ENCODE measurements at regions of chr5 and their contacts with region 1.

Region 1: DNA sequence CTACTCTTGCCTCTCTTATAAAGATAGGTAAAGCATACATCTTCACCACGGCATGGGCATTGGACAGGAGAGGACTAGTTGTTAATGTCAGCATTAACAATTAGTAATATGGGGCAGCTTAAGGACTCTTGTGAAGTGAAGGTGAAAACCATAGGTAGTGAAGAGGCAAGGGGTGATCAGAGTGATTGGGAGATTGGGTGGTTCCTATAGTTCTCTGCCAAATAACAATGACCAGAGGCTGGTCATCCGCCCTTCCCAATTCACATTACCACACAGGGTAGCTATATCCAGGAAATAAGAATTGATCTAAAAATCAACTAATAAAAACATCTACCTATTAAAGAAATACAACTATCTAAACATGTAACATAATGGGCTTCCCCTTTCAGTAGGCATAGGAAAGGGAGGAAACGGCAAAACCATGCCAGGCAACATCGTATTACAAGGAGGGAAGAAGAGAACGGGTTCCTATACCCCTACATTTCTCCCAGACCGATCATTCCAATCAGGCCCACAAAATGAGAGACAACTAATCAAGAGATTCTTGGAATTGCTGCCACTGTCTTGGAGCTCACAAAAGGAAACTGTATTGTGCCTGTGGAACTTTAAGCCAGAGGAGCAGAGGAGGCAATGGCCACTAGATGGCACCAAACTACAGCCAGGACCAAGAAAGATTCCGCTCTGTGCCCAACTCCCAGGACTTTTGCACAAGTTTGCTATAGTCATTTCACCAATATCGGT is 121.6 kb downstream of the FBXL17 start:
- DNase-seq: peak; percentile 83
- H3K4me3 Mint-ChIP-seq: no peak overlapping the region
- H3K27ac Mint-ChIP-seq: no peak overlapping the region
- H3K4me1 Mint-ChIP-seq: no peaks in the 10 kb centered on the region
- H3K27me3 Mint-ChIP-seq: no peaks in the 10 kb centered on the region
- CTCF ChIP-seq: peak; percentile 86

Region 2: DNA sequence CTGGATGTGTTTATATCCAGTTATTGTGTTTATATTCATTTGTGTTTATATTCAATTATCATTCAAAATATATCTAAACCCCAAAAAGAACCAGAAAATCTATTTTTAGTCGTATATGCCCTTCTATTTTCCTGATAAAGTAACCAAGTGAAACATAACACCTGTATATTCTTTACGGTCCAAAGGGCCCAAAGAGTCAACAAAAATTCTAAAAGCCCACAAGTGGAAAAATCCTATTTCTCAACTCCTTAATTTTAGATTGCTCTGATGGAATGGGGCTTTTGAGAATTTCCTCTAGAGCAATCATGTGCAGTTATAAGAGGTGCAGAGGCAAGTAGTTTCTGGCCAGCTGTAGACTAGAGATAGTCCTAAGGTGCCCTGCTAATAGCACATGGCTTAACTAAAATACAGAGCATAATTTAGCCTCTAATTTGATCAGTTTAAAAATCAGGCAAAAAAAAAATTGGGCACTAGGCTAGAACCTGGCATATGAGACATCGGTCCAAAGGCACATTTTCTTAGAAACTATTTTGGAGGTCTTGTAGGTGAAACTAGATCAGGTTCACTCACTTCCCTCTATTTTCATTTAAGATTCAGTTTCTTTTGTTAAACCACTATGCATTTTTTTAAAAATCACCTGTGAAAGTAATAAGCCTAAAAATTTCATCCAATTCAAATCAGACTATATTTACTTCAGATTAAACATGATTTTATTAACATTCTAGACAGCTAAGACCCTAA is 134.3 kb before region 1 on chr5:
- CTCF ChIA-PET with region 1: no interaction called
- POLR2A ChIA-PET with region 1: no interaction called
- intact Hi-C with region 1: no loop called
- DNase-seq: no peak
- H3K4me3 Mint-ChIP-seq: no peak overlapping the region
- H3K27ac Mint-ChIP-seq: no peak overlapping the region
- H3K4me1 Mint-ChIP-seq: no peaks in the 10 kb centered on the region
- H3K27me3 Mint-ChIP-seq: no peaks in the 10 kb centered on the region
- CTCF ChIP-seq: no peak

Region 3: GRCh38 chr5:108174286-108174685 is 86.0 kb before region 1 on chr5:
- CTCF ChIA-PET with region 1: no interaction called
- POLR2A ChIA-PET with region 1: no interaction called
- intact Hi-C with region 1: no loop called
- DNase-seq: no peak
- H3K4me3 Mint-ChIP-seq: no peak overlapping the region
- H3K27ac Mint-ChIP-seq: no peak overlapping the region
- H3K4me1 Mint-ChIP-seq: no peaks in the 10 kb centered on the region
- H3K27me3 Mint-ChIP-seq: no peaks in the 10 kb centered on the region
- CTCF ChIP-seq: no peak

Region 4: GRCh38 chr5:108238936-108239887 is 21.1 kb before region 1 on chr5:
- CTCF ChIA-PET with region 1: interaction called, 23 read pairs
- POLR2A ChIA-PET with region 1: interaction called, 3 read pairs
- intact Hi-C with region 1: no loop called
- DNase-seq: peak; percentile 93
- H3K4me3 Mint-ChIP-seq: no peak overlapping the region
- H3K27ac Mint-ChIP-seq: peak overlapping the region; percentile 35
- H3K4me1 Mint-ChIP-seq: peaks cover 4% of the 10 kb centered on the region
- H3K27me3 Mint-ChIP-seq: no peaks in the 10 kb centered on the region
- CTCF ChIP-seq: no peak

Region 5: GRCh38 chr5:108311682-108312081 is 51.4 kb after region 1 on chr5:
- CTCF ChIA-PET with region 1: interaction called, 22 read pairs
- POLR2A ChIA-PET with region 1: no interaction called
- intact Hi-C with region 1: no loop called
- DNase-seq: peak; percentile 23
- H3K4me3 Mint-ChIP-seq: no peak overlapping the region
- H3K27ac Mint-ChIP-seq: no peak overlapping the region
- H3K4me1 Mint-ChIP-seq: no peaks in the 10 kb centered on the region
- H3K27me3 Mint-ChIP-seq: no peaks in the 10 kb centered on the region
- CTCF ChIP-seq: no peak

Region 6: GRCh38 chr5:108334225-108334624 is 73.9 kb after region 1 on chr5:
- CTCF ChIA-PET with region 1: interaction called, 15 read pairs
- POLR2A ChIA-PET with region 1: no interaction called
- intact Hi-C with region 1: no loop called
- DNase-seq: no peak
- H3K4me3 Mint-ChIP-seq: no peak overlapping the region
- H3K27ac Mint-ChIP-seq: no peak overlapping the region
- H3K4me1 Mint-ChIP-seq: no peaks in the 10 kb centered on the region
- H3K27me3 Mint-ChIP-seq: no peaks in the 10 kb centered on the region
- CTCF ChIP-seq: no peak

Region 7: GRCh38 chr5:108353087-108353486 is 92.8 kb after region 1 on chr5:
- CTCF ChIA-PET with region 1: interaction called, 27 read pairs
- POLR2A ChIA-PET with region 1: no interaction called
- intact Hi-C with region 1: no loop called
- DNase-seq: no peak
- H3K4me3 Mint-ChIP-seq: no peak overlapping the region
- H3K27ac Mint-ChIP-seq: no peak overlapping the region
- H3K4me1 Mint-ChIP-seq: no peaks in the 10 kb centered on the region
- H3K27me3 Mint-ChIP-seq: no peaks in the 10 kb centered on the region
- CTCF ChIP-seq: no peak

Region 8: DNA sequence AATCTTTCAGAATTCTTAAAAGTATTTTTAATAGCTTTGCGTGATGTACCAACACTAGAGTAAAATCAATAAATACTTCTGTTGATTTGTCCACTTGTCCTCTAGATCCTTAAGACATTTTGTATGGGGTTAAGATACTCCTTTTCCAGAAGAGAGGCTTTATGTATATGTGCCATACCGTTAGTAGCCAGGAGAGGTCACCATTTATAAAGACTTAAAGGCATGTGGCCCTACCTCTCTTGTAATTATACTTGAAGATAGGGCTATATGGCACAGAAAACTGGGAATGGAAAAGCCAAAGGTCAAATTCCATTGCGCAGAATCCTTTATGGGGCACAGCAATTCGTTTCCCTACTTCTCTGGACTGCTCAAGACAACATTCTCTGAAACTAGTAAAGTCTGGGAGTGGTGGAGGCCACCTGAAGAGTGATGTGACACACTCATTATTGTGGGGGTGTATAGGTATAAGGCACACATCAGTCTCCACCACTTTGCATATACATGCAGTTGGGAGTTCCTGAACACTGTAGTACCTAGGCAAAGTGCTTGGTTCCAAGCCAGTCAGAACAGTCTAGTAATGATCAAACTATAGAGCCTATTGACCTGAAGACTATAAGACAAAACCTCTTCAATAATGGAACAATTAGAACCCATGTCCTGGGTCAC is 261.7 kb after region 1 on chr5:
- CTCF ChIA-PET with region 1: no interaction called
- POLR2A ChIA-PET with region 1: no interaction called
- intact Hi-C with region 1: loop called (anchors 2 kb)
- DNase-seq: peak; percentile 74
- H3K4me3 Mint-ChIP-seq: no peak overlapping the region
- H3K27ac Mint-ChIP-seq: no peak overlapping the region
- H3K4me1 Mint-ChIP-seq: no peaks in the 10 kb centered on the region
- H3K27me3 Mint-ChIP-seq: peaks cover 34% of the 10 kb centered on the region
- CTCF ChIP-seq: peak; percentile 56

Region 9: DNA sequence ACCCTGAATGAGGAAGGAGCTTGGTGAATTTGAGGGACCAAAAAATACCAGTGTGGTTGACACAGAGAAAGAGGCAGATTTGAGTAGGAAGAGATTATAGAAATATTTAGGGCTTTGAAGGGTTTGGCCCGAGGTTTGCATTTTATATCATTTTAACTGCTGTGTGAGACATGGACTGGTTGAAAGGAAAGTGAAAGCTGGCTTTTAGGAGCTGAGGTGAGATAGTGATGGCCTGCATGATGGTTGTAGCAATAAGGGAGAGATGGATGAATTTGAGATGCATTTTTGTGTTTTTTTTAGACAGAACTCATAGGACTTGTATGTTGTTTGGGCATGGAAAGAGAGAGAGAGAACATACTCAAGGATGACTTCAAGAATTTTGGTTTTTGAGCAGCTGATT is 509.1 kb after region 1 on chr5:
- CTCF ChIA-PET with region 1: no interaction called
- POLR2A ChIA-PET with region 1: no interaction called
- intact Hi-C with region 1: no loop called
- DNase-seq: no peak
- H3K4me3 Mint-ChIP-seq: peak overlapping the region; percentile 1
- H3K27ac Mint-ChIP-seq: no peak overlapping the region
- H3K4me1 Mint-ChIP-seq: peaks cover 32% of the 10 kb centered on the region
- H3K27me3 Mint-ChIP-seq: no peaks in the 10 kb centered on the region
- CTCF ChIP-seq: no peak

Measured in MCF 10A (cell line).